ENCODE measurements at regions of chr15 and their contacts with region 1.

Region 1: DNA sequence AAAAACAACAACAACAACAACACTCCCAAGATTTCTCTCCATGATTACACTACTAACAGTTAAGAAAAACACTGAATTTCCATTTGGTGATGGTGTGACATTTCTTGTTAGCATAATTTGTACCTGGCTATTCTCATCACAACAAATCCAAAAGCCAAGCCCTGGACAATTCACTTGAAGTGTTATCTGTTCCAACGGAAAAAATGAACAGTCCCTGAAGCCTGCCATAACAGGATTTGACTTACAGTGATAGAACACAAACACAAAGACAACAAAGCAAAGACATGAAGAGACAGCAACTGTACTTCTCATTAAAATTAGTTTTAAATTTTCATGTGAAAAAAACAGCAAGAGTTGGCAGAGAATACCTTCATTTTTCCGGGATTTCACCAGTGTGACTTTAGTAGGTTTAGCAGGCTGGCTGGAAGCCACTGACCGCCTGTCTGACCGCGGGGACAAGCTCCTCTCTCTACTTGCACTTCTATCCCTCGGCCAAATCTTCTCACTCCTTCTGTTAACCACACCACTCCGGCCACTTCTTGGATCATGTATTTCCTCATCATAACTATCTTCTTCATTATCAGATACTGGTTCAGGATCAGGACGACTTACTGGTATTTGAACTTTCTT is 56.3 kb downstream of the TJP1 start:
- DNase-seq: peak; percentile 82

Region 2: DNA sequence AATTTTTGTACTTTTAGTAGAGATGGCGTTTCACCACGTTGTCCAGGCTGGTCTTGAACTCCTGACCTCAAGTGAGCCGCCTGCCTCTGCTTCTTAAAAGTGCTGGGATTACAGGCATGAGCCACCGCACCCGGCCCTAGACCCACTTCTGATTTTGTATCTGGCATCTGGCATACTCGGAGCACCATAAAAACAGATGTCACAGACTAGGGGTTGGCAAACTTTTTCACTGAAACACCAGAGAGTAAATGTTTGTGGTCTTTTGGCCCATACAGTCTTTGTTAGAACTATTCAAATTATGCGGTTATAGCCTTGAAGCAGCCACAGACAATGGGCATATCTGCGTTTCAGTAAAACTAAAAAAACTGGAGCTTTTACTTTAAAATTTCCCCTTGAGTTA is 54.5 kb before region 1 on chr15:
- intact Hi-C with region 1: no loop called
- DNase-seq: no peak

Region 3: GRCh38 chr15:29815000-29815710 is 49.1 kb after region 1 on chr15:
- intact Hi-C with region 1: loop called in 1 of 2 experiments (anchors 10 kb)
- DNase-seq: no peak

Region 4: GRCh38 chr15:29913528-29914135 is 147.6 kb after region 1 on chr15:
- intact Hi-C with region 1: loop called in 1 of 2 experiments (anchors 10 kb)
- DNase-seq: no peak

Measured in posterior vena cava (tissue), 2 donors.